ENCODE measurements at regions of chr1 and their contacts with region 1.

Region 1: GRCh38 chr1:212477014-212477679 is 44.4 kb downstream of the NENF start:
- DNase-seq: peak; percentile 51 to 76 (median 65)
- H3K4me3 ChIP-seq: no peak overlapping the region
- H3K4me3 Mint-ChIP-seq: peak overlapping the region in 1 of 7 donors; percentile 28
- H3K27ac ChIP-seq: no peak overlapping the region
- H3K27ac Mint-ChIP-seq: peak overlapping the region in 2 of 8 donors; percentile 14 to 47
- H3K4me1 ChIP-seq: no peaks in the 10 kb centered on the region
- H3K4me1 Mint-ChIP-seq: peaks cover 12 to 17% (median 12%) of the 10 kb centered on the region in 3 donors
- H3K27me3 ChIP-seq: peaks cover 3% of the 10 kb centered on the region
- H3K27me3 Mint-ChIP-seq: peaks cover 15 to 24% of the 10 kb centered on the region in 2 donors

Region 2: DNA sequence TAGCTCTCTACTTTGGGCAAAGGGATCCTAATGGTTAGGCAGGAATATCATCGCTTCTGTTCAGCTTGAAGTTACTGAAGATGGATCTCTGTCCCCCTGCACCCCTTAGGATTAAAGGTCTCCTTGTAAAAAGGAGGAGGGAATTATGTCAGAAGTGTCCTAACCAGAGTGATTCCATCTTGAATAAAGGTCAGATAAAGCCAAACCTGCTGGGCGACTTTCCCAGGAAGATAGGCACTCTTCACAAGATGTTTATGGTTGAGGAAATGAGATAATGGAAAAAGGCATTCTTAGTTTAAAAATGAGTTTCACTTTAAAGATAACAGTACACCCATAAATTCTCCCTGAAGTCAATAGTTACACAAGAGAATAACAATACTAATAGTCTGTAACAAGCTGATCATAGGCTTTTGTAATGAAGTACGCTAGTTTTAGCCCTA is 46.2 kb before region 1 on chr1:
- CTCF ChIA-PET with region 1: no interaction called
- POLR2A ChIA-PET with region 1: no interaction called
- DNase-seq: no peak
- H3K4me3 ChIP-seq: no peak overlapping the region
- H3K4me3 Mint-ChIP-seq: peak overlapping the region in 2 of 7 donors; percentile 20 to 57
- H3K27ac ChIP-seq: no peak overlapping the region
- H3K27ac Mint-ChIP-seq: no peak overlapping the region
- H3K4me1 ChIP-seq: peaks cover 19% of the 10 kb centered on the region
- H3K4me1 Mint-ChIP-seq: peaks cover 18 to 33% (median 26%) of the 10 kb centered on the region in 3 donors
- H3K27me3 ChIP-seq: no peaks in the 10 kb centered on the region
- H3K27me3 Mint-ChIP-seq: peaks cover 0 to 4% of the 10 kb centered on the region in 2 donors

Region 3: GRCh38 chr1:212488397-212489283 is 11.5 kb after region 1 on chr1:
- CTCF ChIA-PET with region 1: interaction called, 24 read pairs
- POLR2A ChIA-PET with region 1: no interaction called
- DNase-seq: no peak
- H3K4me3 ChIP-seq: no peak overlapping the region
- H3K4me3 Mint-ChIP-seq: no peak overlapping the region
- H3K27ac ChIP-seq: no peak overlapping the region
- H3K27ac Mint-ChIP-seq: peak overlapping the region in 2 of 8 donors; percentile 11 to 29
- H3K4me1 ChIP-seq: no peaks in the 10 kb centered on the region
- H3K4me1 Mint-ChIP-seq: no peaks in the 10 kb centered on the region
- H3K27me3 ChIP-seq: no peaks in the 10 kb centered on the region
- H3K27me3 Mint-ChIP-seq: peaks cover 6 to 7% of the 10 kb centered on the region in 2 donors

Region 4: GRCh38 chr1:212498283-212499040 is 21.3 kb after region 1 on chr1:
- CTCF ChIA-PET with region 1: interaction called, 11 read pairs
- POLR2A ChIA-PET with region 1: no interaction called
- DNase-seq: no peak
- H3K4me3 ChIP-seq: no peak overlapping the region
- H3K4me3 Mint-ChIP-seq: no peak overlapping the region
- H3K27ac ChIP-seq: no peak overlapping the region
- H3K27ac Mint-ChIP-seq: no peak overlapping the region
- H3K4me1 ChIP-seq: no peaks in the 10 kb centered on the region
- H3K4me1 Mint-ChIP-seq: no peaks in the 10 kb centered on the region
- H3K27me3 ChIP-seq: peaks cover 5% of the 10 kb centered on the region
- H3K27me3 Mint-ChIP-seq: peaks cover 9 to 13% of the 10 kb centered on the region in 2 donors

Region 5: GRCh38 chr1:212545941-212546635 is 68.9 kb after region 1 on chr1:
- CTCF ChIA-PET with region 1: no interaction called
- POLR2A ChIA-PET with region 1: no interaction called
- DNase-seq: no peak
- H3K4me3 ChIP-seq: no peak overlapping the region
- H3K4me3 Mint-ChIP-seq: no peak overlapping the region
- H3K27ac ChIP-seq: no peak overlapping the region
- H3K27ac Mint-ChIP-seq: no peak overlapping the region
- H3K4me1 ChIP-seq: no peaks in the 10 kb centered on the region
- H3K4me1 Mint-ChIP-seq: no peaks in the 10 kb centered on the region
- H3K27me3 ChIP-seq: peaks cover 5% of the 10 kb centered on the region
- H3K27me3 Mint-ChIP-seq: peaks cover 3 to 40% of the 10 kb centered on the region in 2 donors

Region 6: DNA sequence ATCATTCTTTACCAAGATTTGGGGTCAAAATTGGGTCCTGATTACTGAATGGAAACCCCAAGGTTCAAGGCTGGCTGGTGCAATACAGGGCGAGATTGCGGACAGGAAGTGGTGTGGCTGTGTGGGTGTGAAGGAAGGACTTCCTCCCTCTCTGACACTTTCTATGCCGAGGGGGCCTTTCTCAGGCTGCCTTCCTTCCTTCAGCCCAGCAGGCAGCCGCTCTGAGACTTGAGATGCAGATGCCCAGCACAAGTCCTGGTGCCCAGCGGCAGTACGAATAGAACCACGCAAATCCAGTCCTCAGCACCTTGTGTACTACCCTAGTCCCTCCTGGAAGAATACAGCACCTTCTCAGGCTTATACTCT is 206.2 kb after region 1 on chr1:
- CTCF ChIA-PET with region 1: no interaction called
- POLR2A ChIA-PET with region 1: no interaction called
- DNase-seq: peak in 3 of 5 donors; percentile 18 to 58 (median 23)
- H3K4me3 ChIP-seq: no peak overlapping the region
- H3K4me3 Mint-ChIP-seq: peak overlapping the region; percentile 5 to 86 (median 67)
- H3K27ac ChIP-seq: no peak overlapping the region
- H3K27ac Mint-ChIP-seq: peak overlapping the region in 4 of 8 donors; percentile 15 to 90 (median 34)
- H3K4me1 ChIP-seq: peaks cover 14% of the 10 kb centered on the region
- H3K4me1 Mint-ChIP-seq: peaks cover 24 to 53% (median 35%) of the 10 kb centered on the region in 3 donors
- H3K27me3 ChIP-seq: no peaks in the 10 kb centered on the region
- H3K27me3 Mint-ChIP-seq: peaks cover 0 to 10% of the 10 kb centered on the region in 2 donors